Left cardiac atrium (tissue), 4 donors: ENCODE measurements at regions of chr19 and their contacts with region 1.

Region 1: GRCh38 chr19:55385740-55386529 is at the start of gene RPL28:
- DNase-seq: peak; percentile 99
- ATAC-seq: peak; percentile 88 to 90
- total RNA-seq, gene RPL28: 789 to 866 TPM

Region 2: GRCh38 chr19:55301459-55302317 is 84.2 kb before region 1 on chr19:
- intact Hi-C with region 1: loop called (anchors 5 to 10 kb)
- DNase-seq: peak; percentile 92
- ATAC-seq: peak; percentile 89 to 91

Region 3: DNA sequence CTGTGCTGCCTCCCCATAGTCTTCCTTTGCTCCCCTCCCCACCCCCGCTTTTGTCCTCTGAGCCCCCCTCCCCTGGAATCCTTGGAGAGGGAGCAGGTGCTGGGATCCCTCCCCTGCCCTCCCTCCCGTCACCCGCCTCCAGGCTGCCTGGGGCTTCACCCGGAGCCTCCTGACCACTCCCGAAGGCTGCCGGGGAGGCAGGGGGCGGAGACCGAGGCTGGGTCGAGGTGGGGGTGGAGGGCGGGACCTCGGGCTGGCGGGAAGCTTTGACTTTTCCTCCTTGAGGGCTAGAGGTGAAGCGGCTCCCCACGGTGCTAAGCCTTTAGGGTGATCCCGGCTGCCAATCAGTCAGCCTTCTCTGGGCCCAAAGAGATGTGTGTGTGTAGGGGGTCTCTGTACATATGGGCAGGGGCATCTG is 44.8 kb before region 1 on chr19:
- intact Hi-C with region 1: loop called in 1 of 2 experiments (anchors 5 kb)
- DNase-seq: peak; percentile 82
- ATAC-seq: peak in 1 of 2 donors; percentile 6

Region 4: DNA sequence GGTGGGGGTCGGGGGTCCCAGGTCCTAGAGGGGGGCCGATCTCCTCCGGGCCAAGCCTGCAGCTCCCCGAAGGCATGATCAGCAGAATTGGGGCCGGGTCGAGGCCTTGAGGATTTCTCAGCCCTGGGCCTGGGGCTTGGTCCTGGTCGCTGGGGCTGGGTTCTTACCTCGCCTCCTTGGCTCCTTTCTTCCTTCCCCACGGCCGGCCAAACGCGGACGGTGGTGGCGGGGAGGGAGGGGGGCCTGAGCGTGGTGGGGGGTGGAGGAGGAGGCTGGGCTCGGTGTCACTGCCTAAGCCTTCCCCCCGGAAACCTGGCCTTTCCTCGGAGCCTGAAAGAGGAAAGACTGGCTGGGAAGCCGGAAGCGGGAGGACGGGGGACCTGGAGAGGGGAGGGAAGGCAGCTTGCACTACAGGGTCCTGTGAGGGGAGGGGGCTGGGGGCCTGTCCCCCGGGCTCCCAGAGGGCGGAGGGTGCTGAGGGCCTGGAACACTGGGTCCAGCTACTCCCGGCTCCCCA is 194.8 kb after region 1 on chr19 and contains the start of gene ZNF579:
- intact Hi-C with region 1: no loop called
- DNase-seq: peak; percentile 90
- ATAC-seq: peak; percentile 88
- total RNA-seq, gene ZNF579: 10.8 to 12.7 TPM